Activated CD4-positive, alpha-beta memory T cell treated with anti-CD3 and anti-CD28 coated beads, Interleukin-2, amount 10 ng/mL, durations not matched to agents 7 days and 5 days (primary cell): ENCODE measurements at regions of chr10 and their contacts with region 1.

Region 1: GRCh38 chr10:3068201-3068967 is 1.0 kb downstream of the PFKP start:
- DNase-seq: peak; percentile 69
- H3K4me3 Mint-ChIP-seq: peak overlapping the region; percentile 92
- H3K27ac Mint-ChIP-seq: peak overlapping the region; percentile 81
- H3K4me1 Mint-ChIP-seq: peaks cover 41% of the 10 kb centered on the region
- H3K27me3 Mint-ChIP-seq: peaks cover 8% of the 10 kb centered on the region

Region 2: DNA sequence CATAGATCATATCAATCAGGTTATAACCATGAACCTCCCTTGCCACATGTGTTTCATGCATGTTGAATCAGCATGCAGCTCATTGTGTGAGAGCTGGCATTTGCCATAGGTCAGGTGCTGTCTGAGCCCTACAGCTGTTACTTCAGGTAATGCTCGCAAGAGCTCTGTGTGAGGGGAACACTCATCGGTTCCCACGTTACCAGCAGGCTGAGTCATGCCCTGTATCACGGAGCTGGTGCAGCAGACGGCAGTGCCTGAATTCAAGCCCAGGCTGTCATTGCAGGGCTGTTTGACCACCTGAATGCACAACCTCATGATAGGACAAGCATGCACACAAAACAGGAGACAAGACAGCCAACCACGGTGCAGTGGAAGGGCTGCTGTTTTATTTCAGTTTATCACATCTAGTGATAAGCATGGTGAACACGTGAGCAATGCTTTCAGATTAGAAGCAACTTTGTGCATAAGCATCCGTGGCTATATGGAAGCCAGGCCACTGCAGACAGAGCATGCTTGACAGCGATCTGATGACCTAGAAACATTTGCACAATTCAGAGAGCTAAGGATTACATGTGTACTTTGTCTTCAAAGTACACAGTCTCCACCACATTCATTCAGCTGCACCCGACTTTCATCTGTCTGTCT is 57.4 kb before region 1 on chr10:
- CTCF ChIA-PET with region 1: no interaction called
- POLR2A ChIA-PET with region 1: no interaction called
- DNase-seq: no peak
- H3K4me3 Mint-ChIP-seq: no peak overlapping the region
- H3K27ac Mint-ChIP-seq: no peak overlapping the region
- H3K4me1 Mint-ChIP-seq: no peaks in the 10 kb centered on the region
- H3K27me3 Mint-ChIP-seq: peaks cover 45% of the 10 kb centered on the region

Region 3: GRCh38 chr10:3081383-3081981 is 13.1 kb after region 1 on chr10:
- CTCF ChIA-PET with region 1: no interaction called
- POLR2A ChIA-PET with region 1: interaction called, 14 read pairs
- DNase-seq: no peak
- H3K4me3 Mint-ChIP-seq: no peak overlapping the region
- H3K27ac Mint-ChIP-seq: no peak overlapping the region
- H3K4me1 Mint-ChIP-seq: peaks cover 30% of the 10 kb centered on the region
- H3K27me3 Mint-ChIP-seq: no peaks in the 10 kb centered on the region

Region 4: GRCh38 chr10:3095373-3096139 is 27.2 kb after region 1 on chr10:
- CTCF ChIA-PET with region 1: interaction called, 4 read pairs
- POLR2A ChIA-PET with region 1: interaction called, 51 read pairs
- DNase-seq: peak; percentile 73
- H3K4me3 Mint-ChIP-seq: peak overlapping the region; percentile 25
- H3K27ac Mint-ChIP-seq: peak overlapping the region; percentile 89
- H3K4me1 Mint-ChIP-seq: peaks cover 73% of the 10 kb centered on the region
- H3K27me3 Mint-ChIP-seq: no peaks in the 10 kb centered on the region

Region 5: DNA sequence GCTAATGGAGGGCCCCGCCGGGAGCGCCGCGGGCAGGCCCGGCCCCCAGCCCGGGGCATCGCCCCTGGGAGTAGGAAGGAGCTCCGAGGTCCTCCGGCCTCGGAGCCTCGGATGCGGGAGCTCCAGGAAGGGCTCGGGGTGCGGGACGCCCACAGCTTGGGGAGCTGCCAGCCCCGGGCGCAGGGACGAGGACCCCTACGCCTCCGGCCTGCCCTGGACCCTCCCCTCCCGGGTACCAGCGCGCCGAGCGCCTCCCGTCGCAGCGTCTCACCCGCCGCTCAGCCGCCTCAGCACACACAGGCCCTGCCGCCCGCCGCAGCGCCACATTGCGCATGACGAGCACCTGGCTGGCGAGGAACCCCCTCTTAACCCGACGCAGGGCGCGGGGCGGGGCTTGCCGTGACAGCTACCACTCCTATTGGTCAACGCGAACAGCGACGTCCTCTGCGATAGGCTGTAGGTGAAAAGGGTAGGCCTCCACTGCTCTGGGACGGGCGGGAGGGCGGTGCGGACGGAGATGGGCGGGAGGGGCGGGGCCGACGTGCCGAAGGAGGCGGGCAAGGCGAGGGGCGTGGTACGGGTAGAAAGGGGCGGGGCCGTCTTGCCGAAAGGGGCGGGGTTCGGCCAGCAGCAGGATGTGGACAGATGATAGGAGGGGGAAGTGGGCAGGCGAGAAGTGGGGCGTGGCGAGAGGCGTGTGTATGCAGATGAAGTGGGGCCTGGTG is 104.2 kb after region 1 on chr10 and contains the start of gene PITRM1:
- CTCF ChIA-PET with region 1: no interaction called
- POLR2A ChIA-PET with region 1: interaction called, 10 read pairs
- DNase-seq: peak; percentile 99
- H3K4me3 Mint-ChIP-seq: peak within 1 kb of the TSS; percentile 87
- H3K27ac Mint-ChIP-seq: peak within 1 kb of the TSS; percentile 85
- H3K4me1 Mint-ChIP-seq: peaks cover 21% of the 10 kb centered on the region
- H3K27me3 Mint-ChIP-seq: peaks cover 24% of the 10 kb centered on the region
- total RNA-seq, gene PITRM1: 53.7 to 56.7 TPM